ENCODE measurements at regions of chr22 and their contacts with region 1.

Region 1: GRCh38 chr22:20418211-20418788 is 19.3 kb downstream of the SCARF2 start:
- DNase-seq: peak; percentile 73 to 94 (median 84)
- ATAC-seq: peak; percentile 94
- H3K4me3 ChIP-seq: peak overlapping the region; percentile 8 to 33
- H3K27ac ChIP-seq: no peak overlapping the region
- H3K4me1 ChIP-seq: peaks cover under 1 to 7% of the 10 kb centered on the region in 2 donors
- H3K27me3 ChIP-seq: peaks cover 0 to 2% of the 10 kb centered on the region in 2 donors
- CTCF ChIP-seq: peak; percentile 64 to 90

Region 2: GRCh38 chr22:20111045-20111688 is 307.1 kb before region 1 on chr22:
- intact Hi-C with region 1: no loop called
- DNase-seq: peak in 1 of 4 donors; percentile 52
- ATAC-seq: no peak
- H3K4me3 ChIP-seq: no peak overlapping the region
- H3K27ac ChIP-seq: no peak overlapping the region
- H3K4me1 ChIP-seq: peaks cover 4 to 12% of the 10 kb centered on the region in 2 donors
- H3K27me3 ChIP-seq: no peaks in the 10 kb centered on the region
- CTCF ChIP-seq: no peak

Region 3: GRCh38 chr22:20455709-20456063 is 37.4 kb after region 1 on chr22:
- intact Hi-C with region 1: loop called in 1 of 2 experiments (anchors 2 kb)
- DNase-seq: no peak
- ATAC-seq: no peak
- H3K4me3 ChIP-seq: no peak overlapping the region
- H3K27ac ChIP-seq: no peak overlapping the region
- H3K4me1 ChIP-seq: peaks cover 0 to 23% of the 10 kb centered on the region in 2 donors
- H3K27me3 ChIP-seq: no peaks in the 10 kb centered on the region
- CTCF ChIP-seq: no peak